IMR-90 (cell line): ENCODE measurements at regions of chr9 and their contacts with region 1.

Region 1: DNA sequence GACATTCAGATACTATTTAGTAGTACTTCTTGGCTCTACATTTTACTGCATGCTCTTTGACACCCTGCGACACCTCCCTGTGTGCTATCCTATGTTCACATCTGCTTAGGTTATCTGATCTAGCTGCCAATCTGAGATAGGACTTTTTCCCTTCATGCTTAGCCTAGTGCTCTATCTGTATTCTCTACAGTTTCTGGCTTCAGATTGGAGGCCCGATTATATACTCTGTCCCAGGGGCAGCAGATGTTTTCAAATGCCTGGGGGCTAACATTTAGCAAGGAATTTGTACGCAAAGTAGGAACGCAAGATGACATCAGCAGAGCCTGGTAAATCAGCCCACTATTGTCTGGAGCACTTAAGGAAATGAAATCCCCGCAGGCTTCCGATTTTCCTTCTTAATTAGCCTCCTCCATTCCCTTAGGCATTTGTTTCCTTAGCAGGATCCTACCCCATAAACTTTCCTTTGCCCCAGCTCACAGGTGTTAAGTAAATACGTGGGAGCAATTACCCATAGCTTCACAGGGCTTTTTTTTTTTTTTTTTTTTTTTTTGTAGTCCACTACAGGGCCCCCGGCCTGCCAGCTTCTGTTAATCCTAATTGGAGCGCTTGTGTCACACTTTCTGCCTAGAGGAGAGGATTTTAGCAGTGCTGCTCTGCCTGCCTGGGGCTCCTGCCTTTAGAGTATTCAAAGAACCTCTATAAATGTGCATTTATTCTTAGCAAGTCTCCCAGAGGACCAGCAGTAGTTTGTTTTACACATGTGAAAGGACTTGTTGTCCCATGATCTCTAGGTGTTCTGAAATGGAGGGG is 61.1 kb upstream of the LPAR1 start:
- DNase-seq: no peak
- ATAC-seq: no peak
- H3K4me3 ChIP-seq: no peak overlapping the region
- H3K27ac ChIP-seq: no peak overlapping the region
- H3K4me1 ChIP-seq: peaks cover 8% of the 10 kb centered on the region
- H3K27me3 ChIP-seq: no peaks in the 10 kb centered on the region
- CTCF ChIP-seq: no peak
- POLR2A ChIP-seq: no peak
- RAD21 ChIP-seq: no peak

Region 2: DNA sequence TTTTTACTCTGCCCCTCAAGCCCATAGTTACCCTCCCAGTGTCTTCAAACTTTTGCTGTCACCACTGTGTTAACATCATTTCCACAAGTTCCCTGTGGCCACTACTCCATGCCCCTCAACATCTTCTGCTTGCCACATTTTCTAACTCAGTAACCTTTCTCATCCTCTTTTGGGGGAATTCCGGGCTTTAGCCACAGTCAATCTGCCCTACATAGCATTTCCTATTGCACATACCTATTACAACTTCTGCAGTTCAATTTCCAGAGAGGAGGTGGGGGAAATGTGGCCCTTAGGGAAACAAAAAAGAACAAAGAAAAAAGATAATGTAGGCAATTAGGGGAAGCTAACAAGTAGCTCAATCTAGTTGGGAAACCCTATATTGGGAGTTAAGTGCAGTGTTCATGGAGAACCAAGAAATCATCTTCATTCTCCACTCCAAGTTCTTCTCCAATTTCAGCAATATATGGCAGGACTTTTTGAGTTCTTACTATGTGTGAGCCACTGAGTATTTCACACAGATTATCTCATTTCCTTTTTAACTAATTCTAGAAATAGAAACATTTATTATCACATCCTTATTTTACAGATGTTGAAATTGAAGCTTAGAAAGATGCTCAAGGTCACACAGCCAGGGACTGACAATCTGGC is 20.9 kb before region 1 on chr9:
- CTCF ChIA-PET with region 1: no interaction called
- POLR2A ChIA-PET with region 1: no interaction called
- dilution Hi-C with region 1: no loop called
- in situ Hi-C with region 1: no loop called
- intact Hi-C with region 1: loop called (anchors 1 kb)
- DNase-seq: peak; percentile 58
- ATAC-seq: no peak
- H3K4me3 ChIP-seq: no peak overlapping the region
- H3K27ac ChIP-seq: no peak overlapping the region
- H3K4me1 ChIP-seq: no peaks in the 10 kb centered on the region
- H3K27me3 ChIP-seq: no peaks in the 10 kb centered on the region
- CTCF ChIP-seq: no peak
- POLR2A ChIP-seq: no peak
- RAD21 ChIP-seq: no peak

Region 3: GRCh38 chr9:111144741-111145140 is 45.3 kb after region 1 on chr9:
- CTCF ChIA-PET with region 1: no interaction called
- POLR2A ChIA-PET with region 1: no interaction called
- dilution Hi-C with region 1: no loop called
- in situ Hi-C with region 1: no loop called
- intact Hi-C with region 1: no loop called
- DNase-seq: no peak
- ATAC-seq: no peak
- H3K4me3 ChIP-seq: no peak overlapping the region
- H3K27ac ChIP-seq: no peak overlapping the region
- H3K4me1 ChIP-seq: no peaks in the 10 kb centered on the region; the same call in 1 of the 2 replicates
- H3K27me3 ChIP-seq: no peaks in the 10 kb centered on the region
- CTCF ChIP-seq: no peak
- POLR2A ChIP-seq: no peak
- RAD21 ChIP-seq: no peak